ENCODE measurements at regions of chr1 and their contacts with region 1.

Region 1: DNA sequence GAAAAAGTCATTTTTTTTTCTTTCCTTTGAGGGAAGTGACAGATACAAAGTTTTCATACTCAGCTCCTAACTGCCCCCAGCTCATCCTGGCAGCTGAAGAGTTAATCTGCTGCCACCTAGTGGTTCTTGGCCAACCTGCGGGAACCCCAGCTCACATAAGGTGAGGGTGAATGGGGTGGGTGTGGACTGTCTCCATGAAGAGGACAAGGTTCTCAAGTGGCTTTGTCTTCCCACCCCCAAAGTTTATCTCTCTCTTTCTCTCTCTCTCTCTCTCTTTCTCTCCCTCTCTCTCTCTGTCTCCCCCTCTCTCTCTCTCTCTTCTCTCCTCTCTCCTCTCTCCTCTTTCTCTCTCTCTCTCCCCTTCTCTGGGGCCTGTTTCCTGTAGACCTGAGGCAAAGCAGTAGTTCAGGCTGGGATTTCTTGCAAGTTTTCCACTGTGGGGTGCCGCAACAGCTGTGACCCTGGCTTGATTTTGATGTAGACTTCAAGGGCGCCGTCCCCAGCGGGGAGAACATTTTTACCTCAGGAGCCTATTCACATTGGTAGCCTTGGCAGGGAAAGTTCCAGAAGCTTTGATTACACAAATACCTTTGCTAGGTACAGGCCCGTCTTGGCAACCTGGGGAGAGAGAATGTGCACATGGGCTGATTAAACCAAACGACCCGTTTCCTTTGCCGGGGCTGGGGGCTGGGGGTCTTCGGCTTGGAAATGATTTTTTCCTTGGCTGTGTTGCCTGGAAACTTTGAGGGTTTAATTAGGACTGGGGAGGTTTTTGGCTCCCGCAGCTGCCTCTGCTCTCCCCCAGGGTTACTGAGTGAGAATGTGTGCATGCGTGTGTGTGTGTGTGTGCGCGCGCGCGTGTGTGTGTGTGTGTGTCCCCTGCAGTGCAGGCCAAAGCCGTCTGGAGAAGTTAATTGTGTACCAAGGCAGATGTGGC is 135.9 kb downstream of the TM2D1 start:
- DNase-seq: peak; percentile 69
- H3K4me3 ChIP-seq: no peak overlapping the region
- H3K27ac ChIP-seq: no peak overlapping the region
- H3K4me1 ChIP-seq: no peaks in the 10 kb centered on the region
- H3K27me3 ChIP-seq: peaks cover 0 to 2% of the 10 kb centered on the region in 2 experiments
- CTCF ChIP-seq: peak; percentile 83 to 86
- POLR2A ChIP-seq: no peak

Region 2: GRCh38 chr1:60153961-60154360 is 1435.0 kb before region 1 on chr1:
- CTCF ChIA-PET with region 1: interaction called, 6 read pairs
- POLR2A ChIA-PET with region 1: no interaction called
- dilution Hi-C with region 1: no loop called
- intact Hi-C with region 1: loop called (anchors 5 kb)
- DNase-seq: no peak
- H3K4me3 ChIP-seq: no peak overlapping the region
- H3K27ac ChIP-seq: no peak overlapping the region
- H3K4me1 ChIP-seq: no peaks in the 10 kb centered on the region
- H3K27me3 ChIP-seq: no peaks in the 10 kb centered on the region
- CTCF ChIP-seq: no peak
- POLR2A ChIP-seq: no peak

Region 3: GRCh38 chr1:60969971-60970509 is 619.0 kb before region 1 on chr1:
- CTCF ChIA-PET with region 1: interaction called, 7 read pairs
- POLR2A ChIA-PET with region 1: no interaction called
- dilution Hi-C with region 1: no loop called
- intact Hi-C with region 1: loop called (anchors 1 kb)
- DNase-seq: peak; percentile 57
- H3K4me3 ChIP-seq: no peak overlapping the region
- H3K27ac ChIP-seq: no peak overlapping the region
- H3K4me1 ChIP-seq: peaks cover 5% of the 10 kb centered on the region
- H3K27me3 ChIP-seq: no peaks in the 10 kb centered on the region
- CTCF ChIP-seq: peak in 1 of 2 donors; percentile 21
- POLR2A ChIP-seq: no peak

Region 4: DNA sequence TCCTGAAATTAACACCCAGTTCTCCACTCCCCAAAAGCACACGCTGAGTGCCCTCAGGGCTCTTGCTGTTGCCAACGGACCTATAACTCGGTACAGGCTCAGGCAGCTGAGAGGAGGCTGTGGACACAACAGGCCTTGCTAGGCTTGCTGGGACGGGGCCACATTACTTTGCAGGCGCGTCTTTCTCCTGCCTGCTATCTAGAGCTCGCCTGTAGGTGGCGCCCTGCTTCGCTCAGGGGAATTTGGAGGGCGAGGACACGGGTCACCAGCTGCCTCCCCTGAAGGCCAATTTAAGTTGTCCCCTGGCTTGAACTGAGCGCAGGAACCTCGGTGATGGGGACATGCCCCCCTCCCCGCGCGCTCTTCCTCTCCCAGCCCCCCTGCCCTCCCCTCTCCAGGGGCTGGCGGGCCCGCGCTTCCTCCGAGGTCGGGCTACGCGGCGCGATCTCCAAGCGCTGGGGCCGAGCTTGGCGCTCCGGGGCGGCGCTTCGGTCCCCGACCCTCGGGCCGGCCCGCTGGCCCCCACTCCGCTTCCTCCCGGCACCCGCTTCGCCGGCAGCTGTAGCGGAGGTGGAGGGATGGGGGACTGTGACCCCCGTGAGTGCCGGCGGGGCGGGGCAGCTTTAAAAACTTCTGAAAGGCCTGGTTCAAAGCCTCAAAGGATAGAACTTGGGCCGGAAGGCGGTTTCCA is 539.0 kb before region 1 on chr1:
- CTCF ChIA-PET with region 1: interaction called, 110 read pairs
- POLR2A ChIA-PET with region 1: no interaction called
- dilution Hi-C with region 1: no loop called
- intact Hi-C with region 1: loop called (anchors 1 kb)
- DNase-seq: peak; percentile 93
- H3K4me3 ChIP-seq: peak overlapping the region; percentile 62 to 95 (median 92)
- H3K27ac ChIP-seq: peak overlapping the region; percentile 84
- H3K4me1 ChIP-seq: peaks cover 16% of the 10 kb centered on the region
- H3K27me3 ChIP-seq: no peaks in the 10 kb centered on the region
- CTCF ChIP-seq: peak; percentile 89 to 96
- POLR2A ChIP-seq: peak; percentile 40

Region 5: GRCh38 chr1:61641578-61642336 is 52.8 kb after region 1 on chr1:
- CTCF ChIA-PET with region 1: interaction called, 25 read pairs
- POLR2A ChIA-PET with region 1: no interaction called
- dilution Hi-C with region 1: no loop called
- intact Hi-C with region 1: loop called (anchors 1 kb)
- DNase-seq: peak; percentile 75
- H3K4me3 ChIP-seq: peak overlapping the region in 1 of 3 experiments; percentile 37
- H3K27ac ChIP-seq: no peak overlapping the region
- H3K4me1 ChIP-seq: peaks cover 7% of the 10 kb centered on the region
- H3K27me3 ChIP-seq: no peaks in the 10 kb centered on the region
- CTCF ChIP-seq: peak; percentile 60 to 90
- POLR2A ChIP-seq: no peak

Measured in endothelial cell of umbilical vein (primary cell).